ENCODE measurements at regions of chr6 and their contacts with region 1.

Region 1: GRCh38 chr6:158213925-158214674 is 46.0 kb downstream of the GTF2H5 start:
- DNase-seq: peak; percentile 66
- ATAC-seq: peak; percentile 100
- H3K4me3 Mint-ChIP-seq: no peak overlapping the region
- H3K27ac Mint-ChIP-seq: no peak overlapping the region
- H3K4me1 Mint-ChIP-seq: no peaks in the 10 kb centered on the region
- H3K27me3 Mint-ChIP-seq: 0 out of 2 replicates have a peak, but pooled peaks cover 5% of the 10 kb centered on the region
- CTCF ChIP-seq: no peak

Region 2: GRCh38 chr6:158194487-158195280 is 19.4 kb before region 1 on chr6:
- CTCF ChIA-PET with region 1: interaction called, 10 read pairs
- POLR2A ChIA-PET with region 1: no interaction called
- DNase-seq: no peak
- ATAC-seq: peak; percentile 82
- H3K4me3 Mint-ChIP-seq: peak overlapping the region; percentile 64
- H3K27ac Mint-ChIP-seq: peak overlapping the region; percentile 64
- H3K4me1 Mint-ChIP-seq: peaks cover 57% of the 10 kb centered on the region
- H3K27me3 Mint-ChIP-seq: no peaks in the 10 kb centered on the region
- CTCF ChIP-seq: no peak

Region 3: GRCh38 chr6:158496700-158497099 is 282.6 kb after region 1 on chr6:
- CTCF ChIA-PET with region 1: interaction called, 12 read pairs
- POLR2A ChIA-PET with region 1: no interaction called
- DNase-seq: no peak
- ATAC-seq: peak; percentile 90
- H3K4me3 Mint-ChIP-seq: no peak overlapping the region
- H3K27ac Mint-ChIP-seq: no peak overlapping the region
- H3K4me1 Mint-ChIP-seq: no peaks in the 10 kb centered on the region
- H3K27me3 Mint-ChIP-seq: no peaks in the 10 kb centered on the region
- CTCF ChIP-seq: no peak

Region 4: DNA sequence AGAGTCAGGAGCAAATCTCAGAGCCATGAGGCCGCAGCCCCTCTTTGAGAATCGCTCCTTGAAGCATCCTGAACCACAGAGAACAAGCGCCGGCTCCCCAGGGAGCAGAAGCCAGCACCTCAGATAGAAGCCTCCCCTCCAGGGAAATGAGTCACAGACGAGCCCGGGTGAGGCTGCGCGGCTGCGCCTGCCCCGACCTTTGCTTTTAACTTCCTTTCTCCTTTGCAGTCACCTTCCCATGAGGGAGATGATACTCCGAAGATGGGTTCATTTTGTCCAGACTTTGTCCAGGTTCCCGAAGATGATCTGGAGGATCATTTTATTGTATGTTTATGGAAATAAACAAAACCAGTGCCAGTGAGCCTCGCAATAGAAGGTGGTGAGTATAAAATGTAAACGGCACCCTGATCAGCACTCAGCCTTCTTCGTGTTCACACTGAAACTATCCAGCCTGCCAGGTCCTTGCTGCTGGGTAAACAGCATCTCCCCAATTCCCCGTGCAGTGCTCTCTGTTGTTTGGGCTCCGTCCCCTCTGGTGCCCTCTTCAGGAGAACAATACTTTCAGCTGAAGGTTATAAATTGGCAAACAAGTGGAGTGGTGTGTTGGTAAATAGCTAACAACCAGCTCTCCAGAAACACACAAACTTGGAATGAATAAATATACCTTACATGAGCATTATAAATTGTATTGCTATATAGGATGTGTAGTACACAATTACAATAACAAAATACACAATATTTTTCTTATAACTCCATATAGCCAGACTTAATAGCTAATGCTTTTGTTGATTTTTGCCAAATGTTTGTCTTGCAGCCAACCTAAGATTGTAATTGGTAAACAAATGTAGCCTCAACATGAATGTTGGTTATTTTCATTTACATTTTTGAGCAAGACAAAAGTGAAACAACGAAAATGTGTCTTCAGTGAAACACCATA is 304.4 kb after region 1 on chr6:
- CTCF ChIA-PET with region 1: interaction called, 26 read pairs
- POLR2A ChIA-PET with region 1: interaction called, 5 read pairs
- DNase-seq: peak; percentile 75
- ATAC-seq: peak; percentile 84
- H3K4me3 Mint-ChIP-seq: peak overlapping the region; percentile 67
- H3K27ac Mint-ChIP-seq: peak overlapping the region; percentile 40; the same call in 1 of the 2 replicates
- H3K4me1 Mint-ChIP-seq: peaks cover 21% of the 10 kb centered on the region
- H3K27me3 Mint-ChIP-seq: peaks cover 35% of the 10 kb centered on the region
- CTCF ChIP-seq: no peak

Region 5: DNA sequence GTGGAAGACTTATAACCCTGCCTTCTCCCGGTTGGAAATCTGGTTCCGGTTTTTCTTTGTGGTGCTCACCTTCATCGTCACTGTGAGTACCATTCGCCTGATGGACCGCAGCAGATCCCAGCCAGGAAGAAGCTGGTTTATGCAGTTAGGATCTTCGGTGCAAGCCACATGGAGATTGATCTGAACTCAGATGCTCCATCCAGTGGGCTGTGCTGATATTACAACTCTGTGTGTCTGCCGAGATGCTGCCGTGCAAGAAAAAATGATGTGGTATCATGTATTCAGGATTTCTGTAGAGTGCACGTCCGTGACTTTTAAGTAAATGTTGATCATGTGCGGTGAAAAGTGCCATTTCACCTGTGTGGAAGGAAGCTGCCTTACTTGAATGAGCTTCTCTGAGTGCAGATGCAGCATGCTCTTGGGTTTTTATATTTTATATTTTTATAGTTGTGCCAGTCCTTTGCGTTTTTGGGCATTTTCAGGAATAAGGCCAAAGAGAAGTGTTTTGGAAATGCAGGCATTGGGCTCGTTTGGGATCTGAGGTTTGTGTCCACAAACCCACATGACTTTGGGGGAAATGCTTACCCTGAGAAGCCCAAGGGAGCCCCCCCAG is 391.3 kb after region 1 on chr6:
- CTCF ChIA-PET with region 1: interaction called, 24 read pairs
- POLR2A ChIA-PET with region 1: no interaction called
- DNase-seq: peak; percentile 82
- ATAC-seq: peak; percentile 97
- H3K4me3 Mint-ChIP-seq: no peak overlapping the region
- H3K27ac Mint-ChIP-seq: peak overlapping the region; percentile 32; the same call in 1 of the 2 replicates
- H3K4me1 Mint-ChIP-seq: no peaks in the 10 kb centered on the region
- H3K27me3 Mint-ChIP-seq: no peaks in the 10 kb centered on the region
- CTCF ChIP-seq: peak; percentile 63

Region 6: DNA sequence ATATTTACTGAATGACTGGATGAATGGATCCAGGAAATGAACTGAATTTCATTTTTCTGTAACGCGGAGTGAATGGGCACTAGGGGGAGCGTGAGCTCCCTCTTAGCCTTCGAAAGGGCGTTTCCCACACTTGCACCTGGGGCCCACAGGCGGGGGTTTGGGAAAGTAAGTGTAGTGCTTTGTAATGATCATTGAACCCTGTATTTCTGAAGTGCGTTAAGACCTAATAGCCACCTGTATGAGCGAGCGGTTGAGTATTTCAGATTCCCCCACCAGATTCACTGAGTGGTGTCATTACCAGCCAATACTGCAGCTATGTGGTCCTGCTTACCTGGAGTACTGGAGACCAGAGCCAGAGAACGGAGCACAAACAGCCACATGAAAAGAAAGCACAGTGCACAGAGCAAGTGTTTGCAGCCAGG is 446.2 kb after region 1 on chr6:
- CTCF ChIA-PET with region 1: interaction called, 10 read pairs
- POLR2A ChIA-PET with region 1: no interaction called
- DNase-seq: peak; percentile 52
- ATAC-seq: peak; percentile 78
- H3K4me3 Mint-ChIP-seq: no peak overlapping the region
- H3K27ac Mint-ChIP-seq: no peak overlapping the region
- H3K4me1 Mint-ChIP-seq: peaks cover 23% of the 10 kb centered on the region
- H3K27me3 Mint-ChIP-seq: peaks cover 2% of the 10 kb centered on the region; the same call in 1 of the 2 replicates
- CTCF ChIP-seq: no peak; the same call in 1 of the 2 replicates

Region 7: DNA sequence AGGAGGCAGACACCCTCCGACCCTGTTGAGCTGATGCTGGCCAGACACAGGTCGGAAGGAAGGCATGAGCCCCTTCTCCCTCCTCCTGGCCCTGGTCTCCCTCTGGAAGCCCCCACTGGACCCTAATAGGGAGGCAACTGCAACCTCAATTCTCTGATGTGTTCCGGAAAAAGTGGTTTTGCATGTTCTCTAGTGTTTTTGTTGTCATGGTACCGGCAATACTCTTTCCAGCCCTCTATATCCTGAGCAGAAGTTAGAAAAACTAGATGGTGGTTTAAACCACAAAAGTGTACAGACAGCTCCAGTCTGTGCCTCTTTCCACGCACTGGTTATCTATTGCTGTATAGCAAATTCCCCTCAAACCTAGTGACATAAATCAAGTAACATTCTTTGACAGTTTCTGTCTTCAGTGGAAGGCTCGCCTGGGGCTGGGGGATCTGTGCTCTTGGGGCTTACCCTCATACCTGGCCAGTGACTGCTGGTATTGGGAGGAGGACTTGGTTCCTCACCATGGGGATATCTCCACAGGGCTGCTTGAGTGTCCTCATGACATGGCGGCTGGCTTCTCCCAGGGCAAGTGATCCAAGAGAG is 472.8 kb after region 1 on chr6:
- CTCF ChIA-PET with region 1: interaction called, 38 read pairs
- POLR2A ChIA-PET with region 1: no interaction called
- DNase-seq: no peak
- ATAC-seq: peak; percentile 30; the same call in 1 of the 2 replicates
- H3K4me3 Mint-ChIP-seq: no peak overlapping the region
- H3K27ac Mint-ChIP-seq: no peak overlapping the region
- H3K4me1 Mint-ChIP-seq: peaks cover 17% of the 10 kb centered on the region
- H3K27me3 Mint-ChIP-seq: no peaks in the 10 kb centered on the region; the same call in 1 of the 2 replicates
- CTCF ChIP-seq: no peak